CD4-positive, alpha-beta memory T cell (primary cell): ENCODE measurements at regions of chr16 and their contacts with region 1.

Region 1: GRCh38 chr16:21300309-21301167 is 22.4 kb upstream of the CRYM start:
- DNase-seq: peak; percentile 7 to 45 (median 27)
- H3K4me3 ChIP-seq: peak overlapping the region; percentile 55 to 59
- H3K4me3 Mint-ChIP-seq: peak overlapping the region; percentile 88 to 97 (median 92)
- H3K27ac ChIP-seq: no peak overlapping the region
- H3K27ac Mint-ChIP-seq: peak overlapping the region; percentile 8 to 69 (median 48)
- H3K4me1 ChIP-seq: peaks cover 18% of the 10 kb centered on the region
- H3K4me1 Mint-ChIP-seq: peaks cover 12 to 26% (median 21%) of the 10 kb centered on the region in 4 donors
- H3K27me3 ChIP-seq: no peaks in the 10 kb centered on the region
- H3K27me3 Mint-ChIP-seq: peaks cover 0 to 2% of the 10 kb centered on the region in 2 donors

Region 2: DNA sequence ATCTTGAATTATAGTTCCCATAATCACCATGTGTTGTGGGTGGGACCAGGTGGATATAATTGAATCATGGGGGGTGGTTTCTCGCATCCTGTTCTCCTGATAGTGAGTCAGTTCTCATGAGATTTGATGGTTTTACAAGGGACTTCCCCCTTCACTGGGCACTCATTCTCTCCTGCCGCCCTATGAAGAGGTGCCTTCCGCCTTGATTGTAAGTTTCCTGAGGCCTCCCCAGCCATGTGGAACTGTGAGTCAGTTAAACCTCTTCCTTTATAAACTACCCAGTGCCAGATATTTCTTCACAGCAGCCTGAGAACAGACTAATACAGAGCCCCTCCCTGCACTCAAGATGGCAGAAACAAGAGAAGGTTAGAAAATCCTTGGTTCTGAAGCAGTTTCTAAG is 115.7 kb before region 1 on chr16:
- CTCF ChIA-PET with region 1: interaction called, 3 read pairs
- POLR2A ChIA-PET with region 1: no interaction called
- intact Hi-C with region 1: loop called (anchors 1 kb)
- DNase-seq: no peak
- H3K4me3 ChIP-seq: no peak overlapping the region
- H3K4me3 Mint-ChIP-seq: no peak overlapping the region
- H3K27ac ChIP-seq: no peak overlapping the region
- H3K27ac Mint-ChIP-seq: peak overlapping the region in 1 of 7 donors; percentile 36
- H3K4me1 ChIP-seq: peaks cover 4% of the 10 kb centered on the region
- H3K4me1 Mint-ChIP-seq: peaks cover 3 to 6% (median 4%) of the 10 kb centered on the region in 4 donors
- H3K27me3 ChIP-seq: no peaks in the 10 kb centered on the region
- H3K27me3 Mint-ChIP-seq: peaks cover 1 to 4% of the 10 kb centered on the region in 2 donors

Region 3: DNA sequence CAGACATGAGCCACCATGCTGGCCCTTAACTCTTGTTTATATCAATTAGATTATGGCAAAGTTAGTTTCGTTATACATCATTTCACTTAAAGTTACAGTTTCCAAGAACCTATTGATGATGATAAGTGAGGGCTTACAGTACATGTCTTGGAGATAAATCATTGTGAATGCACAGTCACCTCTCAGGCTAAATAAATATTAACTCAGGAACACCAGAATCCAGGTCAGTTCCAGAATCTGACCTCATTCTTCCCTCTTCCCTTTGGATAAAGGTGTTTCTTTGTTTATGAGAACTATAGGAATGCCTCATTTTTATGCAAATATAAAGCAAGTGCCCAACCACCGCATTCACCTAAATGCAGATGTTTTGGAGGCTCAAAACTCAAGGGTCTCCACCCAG is 25.9 kb after region 1 on chr16:
- CTCF ChIA-PET with region 1: no interaction called
- POLR2A ChIA-PET with region 1: no interaction called
- intact Hi-C with region 1: no loop called
- DNase-seq: no peak
- H3K4me3 ChIP-seq: no peak overlapping the region
- H3K4me3 Mint-ChIP-seq: no peak overlapping the region
- H3K27ac ChIP-seq: no peak overlapping the region
- H3K27ac Mint-ChIP-seq: no peak overlapping the region
- H3K4me1 ChIP-seq: no peaks in the 10 kb centered on the region
- H3K4me1 Mint-ChIP-seq: no peaks in the 10 kb centered on the region
- H3K27me3 ChIP-seq: no peaks in the 10 kb centered on the region
- H3K27me3 Mint-ChIP-seq: peaks cover 3 to 12% of the 10 kb centered on the region in 2 donors

Region 4: GRCh38 chr16:21338537-21339268 is 38.2 kb after region 1 on chr16:
- CTCF ChIA-PET with region 1: no interaction called
- POLR2A ChIA-PET with region 1: no interaction called
- intact Hi-C with region 1: no loop called
- DNase-seq: no peak
- H3K4me3 ChIP-seq: no peak overlapping the region
- H3K4me3 Mint-ChIP-seq: no peak overlapping the region
- H3K27ac ChIP-seq: no peak overlapping the region
- H3K27ac Mint-ChIP-seq: no peak overlapping the region
- H3K4me1 ChIP-seq: no peaks in the 10 kb centered on the region
- H3K4me1 Mint-ChIP-seq: no peaks in the 10 kb centered on the region
- H3K27me3 ChIP-seq: no peaks in the 10 kb centered on the region
- H3K27me3 Mint-ChIP-seq: peaks cover 11 to 16% of the 10 kb centered on the region in 2 donors